ENCODE measurements at regions of chr4 and their contacts with region 1.

Region 1: GRCh38 chr4:87006676-87007527 is 72.1 kb downstream of the AFF1 start:
- DNase-seq: peak; percentile 91
- H3K4me3 Mint-ChIP-seq: peak overlapping the region; percentile 75
- H3K27ac Mint-ChIP-seq: peak overlapping the region; percentile 65
- H3K4me1 Mint-ChIP-seq: peaks cover 31% of the 10 kb centered on the region
- H3K27me3 Mint-ChIP-seq: no peaks in the 10 kb centered on the region
- CTCF ChIP-seq: peak; percentile 26

Region 2: DNA sequence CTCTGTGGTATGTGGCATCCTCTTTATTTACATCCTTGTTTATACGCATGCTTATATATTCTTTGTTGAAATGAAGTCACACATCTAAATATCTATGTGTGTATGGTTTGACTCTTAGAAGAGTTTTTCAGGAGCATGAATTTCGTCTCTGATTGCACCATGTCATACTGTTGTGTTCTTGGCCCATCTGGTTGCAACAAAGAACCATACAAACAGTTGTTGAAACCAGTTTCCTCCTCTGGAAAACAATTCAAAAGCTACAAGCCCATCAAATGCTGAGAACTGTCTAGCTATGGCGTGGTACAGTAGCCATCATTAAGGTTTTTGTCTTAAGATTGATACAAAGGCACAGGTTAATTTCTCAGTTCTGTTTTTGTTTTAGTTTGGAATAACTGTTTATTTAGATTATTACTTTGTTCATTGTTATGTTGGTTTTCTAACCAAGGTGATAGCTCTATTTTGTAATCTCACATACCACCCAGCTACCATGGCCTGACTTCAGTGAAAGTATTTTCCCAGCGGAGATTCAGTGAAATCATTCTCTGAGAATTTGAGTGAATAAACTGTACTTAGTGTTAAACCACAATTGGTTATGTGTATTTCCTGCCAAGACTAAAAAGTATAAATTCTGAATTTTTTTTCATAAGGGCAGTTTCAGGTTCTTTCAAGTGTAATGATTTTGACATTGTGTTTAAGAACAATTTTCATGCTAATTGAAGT is 1441.0 kb before region 1 on chr4:
- CTCF ChIA-PET with region 1: no interaction called
- POLR2A ChIA-PET with region 1: no interaction called
- intact Hi-C with region 1: no loop called
- DNase-seq: no peak
- H3K4me3 Mint-ChIP-seq: no peak overlapping the region
- H3K27ac Mint-ChIP-seq: no peak overlapping the region
- H3K4me1 Mint-ChIP-seq: peaks cover 6% of the 10 kb centered on the region
- H3K27me3 Mint-ChIP-seq: no peaks in the 10 kb centered on the region
- CTCF ChIP-seq: no peak

Region 3: GRCh38 chr4:86508436-86508835 is 498.5 kb before region 1 on chr4:
- CTCF ChIA-PET with region 1: no interaction called
- POLR2A ChIA-PET with region 1: no interaction called
- intact Hi-C with region 1: no loop called
- DNase-seq: no peak
- H3K4me3 Mint-ChIP-seq: no peak overlapping the region
- H3K27ac Mint-ChIP-seq: no peak overlapping the region
- H3K4me1 Mint-ChIP-seq: no peaks in the 10 kb centered on the region
- H3K27me3 Mint-ChIP-seq: no peaks in the 10 kb centered on the region
- CTCF ChIP-seq: no peak

Region 4: GRCh38 chr4:86757468-86757867 is 249.4 kb before region 1 on chr4:
- CTCF ChIA-PET with region 1: no interaction called
- POLR2A ChIA-PET with region 1: no interaction called
- intact Hi-C with region 1: no loop called
- DNase-seq: peak; percentile 27
- H3K4me3 Mint-ChIP-seq: no peak overlapping the region
- H3K27ac Mint-ChIP-seq: no peak overlapping the region
- H3K4me1 Mint-ChIP-seq: peaks cover 5% of the 10 kb centered on the region
- H3K27me3 Mint-ChIP-seq: no peaks in the 10 kb centered on the region
- CTCF ChIP-seq: no peak

Region 5: DNA sequence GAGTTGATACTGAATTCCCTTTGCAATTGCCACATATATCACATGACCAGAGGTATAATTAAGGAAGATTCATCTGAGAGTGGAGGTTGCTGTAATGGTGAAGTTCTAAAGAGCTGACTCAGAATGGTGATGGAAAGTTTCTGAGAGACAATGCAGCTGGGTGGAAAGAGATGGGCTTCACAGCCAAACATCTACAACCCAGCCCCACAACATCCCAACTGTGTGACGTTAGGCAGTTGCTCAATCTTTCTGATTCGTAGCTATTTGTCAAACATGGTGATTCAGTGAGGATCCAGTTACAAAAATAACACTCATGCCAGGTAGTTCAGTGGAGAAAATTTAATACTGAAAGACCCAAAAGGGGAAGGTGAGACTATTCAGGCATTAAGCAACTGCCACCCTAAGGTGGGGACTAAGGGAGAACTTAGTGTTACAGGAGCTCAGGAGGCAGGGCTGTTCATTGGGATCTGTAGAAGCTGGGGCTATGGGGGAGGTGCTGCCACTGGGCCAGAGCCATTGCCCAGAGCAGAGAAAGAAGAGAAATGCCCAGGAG is 79.0 kb before region 1 on chr4:
- CTCF ChIA-PET with region 1: interaction called, 30 read pairs
- POLR2A ChIA-PET with region 1: interaction called, 256 read pairs
- intact Hi-C with region 1: no loop called
- DNase-seq: peak; percentile 99
- H3K4me3 Mint-ChIP-seq: peak overlapping the region; percentile 32
- H3K27ac Mint-ChIP-seq: peak overlapping the region; percentile 88
- H3K4me1 Mint-ChIP-seq: peaks cover 45% of the 10 kb centered on the region
- H3K27me3 Mint-ChIP-seq: no peaks in the 10 kb centered on the region
- CTCF ChIP-seq: no peak

Region 6: GRCh38 chr4:86977621-86978184 is 29.2 kb before region 1 on chr4:
- CTCF ChIA-PET with region 1: no interaction called
- POLR2A ChIA-PET with region 1: interaction called, 13 read pairs
- intact Hi-C with region 1: loop called (anchors 1 kb)
- DNase-seq: peak; percentile 94
- H3K4me3 Mint-ChIP-seq: peak overlapping the region; percentile 43
- H3K27ac Mint-ChIP-seq: peak overlapping the region; percentile 96
- H3K4me1 Mint-ChIP-seq: peaks cover 51% of the 10 kb centered on the region
- H3K27me3 Mint-ChIP-seq: no peaks in the 10 kb centered on the region
- CTCF ChIP-seq: no peak

Region 7: DNA sequence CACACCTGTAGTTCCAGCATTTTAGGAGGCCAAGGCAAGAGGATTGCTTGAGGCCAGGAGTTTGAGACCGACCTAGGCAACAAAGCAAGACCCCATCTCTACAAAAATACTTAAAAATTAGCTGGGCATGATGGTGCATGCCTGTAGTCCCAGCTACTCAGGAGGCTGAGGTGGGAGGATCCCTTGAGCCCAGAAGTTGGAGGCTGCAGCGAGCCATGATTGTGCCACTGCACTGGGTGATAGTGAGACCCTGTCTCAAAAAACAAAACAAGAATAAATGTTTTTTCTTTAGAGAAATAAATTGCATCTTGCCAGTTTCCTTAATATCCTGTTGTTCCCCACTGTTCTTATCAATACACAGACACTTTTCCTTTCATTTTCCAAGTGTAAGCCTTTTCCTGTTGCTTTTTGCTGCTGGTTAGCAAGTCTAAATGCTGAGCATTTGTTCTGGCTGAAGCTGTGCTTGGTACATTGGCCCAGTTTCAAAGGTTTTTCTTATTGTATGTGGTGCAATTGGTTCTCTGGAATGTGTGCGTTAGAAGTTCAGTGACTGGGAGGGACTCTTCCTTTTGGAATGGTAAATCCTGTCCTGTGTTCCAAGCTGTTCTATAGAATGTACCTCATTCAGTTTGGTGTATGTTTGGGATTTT is 26.1 kb after region 1 on chr4:
- CTCF ChIA-PET with region 1: no interaction called
- POLR2A ChIA-PET with region 1: interaction called, 16 read pairs
- intact Hi-C with region 1: no loop called
- DNase-seq: peak; percentile 67
- H3K4me3 Mint-ChIP-seq: no peak overlapping the region
- H3K27ac Mint-ChIP-seq: no peak overlapping the region
- H3K4me1 Mint-ChIP-seq: peaks cover 13% of the 10 kb centered on the region
- H3K27me3 Mint-ChIP-seq: no peaks in the 10 kb centered on the region
- CTCF ChIP-seq: no peak

Region 8: DNA sequence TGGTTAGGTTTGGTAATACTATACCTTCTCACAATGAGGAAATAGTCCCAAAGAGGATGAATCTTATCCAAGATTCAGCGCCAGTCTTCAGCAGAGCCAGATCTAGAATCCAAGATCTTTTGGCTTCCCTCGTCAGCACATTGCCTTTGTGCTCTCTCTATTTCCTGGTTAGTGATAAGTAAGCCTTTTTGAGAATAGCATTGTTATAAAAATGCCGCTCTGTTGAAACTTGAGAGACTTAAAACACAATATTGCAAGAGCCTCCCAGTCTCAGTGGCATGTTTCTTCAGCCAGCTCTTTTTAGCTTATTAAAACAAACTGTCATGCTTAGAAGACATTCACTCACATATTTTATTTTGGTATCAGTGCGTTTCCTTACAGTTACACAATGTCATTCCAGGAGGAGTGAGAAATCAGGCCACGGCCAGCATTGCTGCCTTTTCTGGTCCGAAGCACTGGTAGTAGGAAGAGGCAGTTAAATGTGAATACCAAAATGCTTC is 72.1 kb after region 1 on chr4:
- CTCF ChIA-PET with region 1: interaction called, 3 read pairs
- POLR2A ChIA-PET with region 1: interaction called, 14 read pairs
- intact Hi-C with region 1: no loop called
- DNase-seq: peak; percentile 34
- H3K4me3 Mint-ChIP-seq: no peak overlapping the region
- H3K27ac Mint-ChIP-seq: no peak overlapping the region
- H3K4me1 Mint-ChIP-seq: peaks cover 40% of the 10 kb centered on the region
- H3K27me3 Mint-ChIP-seq: no peaks in the 10 kb centered on the region
- CTCF ChIP-seq: no peak

Region 9: DNA sequence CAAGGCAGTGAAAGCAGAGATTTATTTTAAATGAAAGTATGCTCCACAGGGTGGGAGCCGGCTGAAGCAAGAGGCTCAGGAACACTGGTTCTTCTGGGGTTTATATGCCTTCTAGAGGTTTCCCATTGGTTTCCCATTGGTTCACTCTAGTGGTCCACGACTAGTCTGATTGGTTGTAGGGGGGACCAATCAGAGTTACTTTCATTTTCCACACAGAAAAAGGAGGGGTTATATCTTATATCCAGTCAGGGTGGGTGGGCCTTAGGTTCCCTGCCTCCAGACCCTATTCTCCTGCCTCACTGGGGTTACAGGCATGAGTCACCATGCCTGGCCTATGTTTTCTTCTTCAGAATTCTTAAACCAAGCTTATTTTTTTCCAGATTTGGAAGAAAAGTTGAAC is 111.9 kb after region 1 on chr4:
- CTCF ChIA-PET with region 1: interaction called, 4 read pairs
- POLR2A ChIA-PET with region 1: interaction called, 63 read pairs
- intact Hi-C with region 1: loop called (anchors 5 kb)
- DNase-seq: peak; percentile 28
- H3K4me3 Mint-ChIP-seq: no peak overlapping the region
- H3K27ac Mint-ChIP-seq: no peak overlapping the region
- H3K4me1 Mint-ChIP-seq: peaks cover 29% of the 10 kb centered on the region
- H3K27me3 Mint-ChIP-seq: no peaks in the 10 kb centered on the region
- CTCF ChIP-seq: no peak